SK-MEL-5 (cell line): ENCODE measurements at regions of chr3 and their contacts with region 1.

Region 1: GRCh38 chr3:184543843-184544512 is 17.6 kb upstream of the EPHB3 start:
- DNase-seq: peak; percentile 86

Region 2: GRCh38 chr3:184362668-184363540 is 181.1 kb before region 1 on chr3:
- in situ Hi-C with region 1: loop called (anchors 25 kb)
- DNase-seq: peak; percentile 98

Region 3: DNA sequence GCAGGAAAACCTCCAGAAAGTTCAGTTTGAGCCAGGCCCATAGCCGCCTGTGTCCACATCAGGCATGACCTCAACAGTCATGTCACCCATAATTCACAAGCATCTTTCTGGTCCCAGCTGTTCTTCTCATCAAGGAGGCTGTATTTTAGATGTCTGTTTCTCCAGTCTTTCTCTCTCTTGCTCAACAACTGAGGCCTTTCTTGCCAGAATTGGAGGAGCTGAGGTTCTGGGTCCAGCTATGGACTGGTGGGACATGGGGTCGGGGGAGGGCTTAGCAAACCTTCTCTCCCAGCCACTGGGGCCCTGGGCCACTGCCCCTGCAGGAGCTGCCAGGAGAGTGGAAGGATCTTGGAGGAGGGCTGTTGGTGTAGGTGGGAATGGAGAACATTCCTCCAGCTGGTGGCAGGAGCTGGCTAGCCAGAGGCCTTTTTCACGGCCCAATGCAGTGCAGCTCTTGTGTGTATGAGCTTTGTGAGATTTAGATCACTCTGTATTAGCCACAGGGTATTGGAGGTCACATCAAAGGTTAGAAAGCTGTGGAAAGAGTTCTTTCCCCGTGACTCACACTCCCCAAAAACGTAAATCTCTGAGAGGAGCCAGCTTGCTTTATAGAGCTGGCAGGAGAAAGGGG is 144.4 kb after region 1 on chr3:
- in situ Hi-C with region 1: no loop called
- DNase-seq: no peak